H1 (cell line): ENCODE measurements at regions of chr14 and their contacts with region 1.

Region 1: DNA sequence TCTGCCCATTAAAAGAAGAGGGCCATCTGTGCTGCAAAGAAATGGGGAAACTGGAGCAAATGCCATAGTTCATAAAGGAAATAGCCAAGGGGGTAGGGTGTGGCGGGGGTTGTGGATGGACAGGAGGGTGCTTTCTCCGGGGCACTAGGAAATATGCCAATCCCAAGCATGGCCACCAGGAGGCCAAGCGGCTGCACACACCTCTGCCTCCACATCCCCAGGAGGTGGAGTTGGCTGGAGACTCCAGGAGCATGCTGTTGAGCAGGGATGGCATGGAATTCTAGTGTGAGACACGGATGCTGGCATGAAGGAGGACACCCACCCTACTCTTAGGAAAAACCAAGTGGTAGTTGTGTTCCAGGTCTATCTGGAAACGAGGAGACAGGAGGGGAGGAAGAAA is 25.2 kb downstream of the NID2 start:
- DNase-seq: peak in 1 of 2 experiments; percentile 72
- H3K4me3 ChIP-seq: no peak overlapping the region
- H3K27ac ChIP-seq: no peak overlapping the region
- H3K4me1 ChIP-seq: peaks cover 0 to 2% (median under 1%) of the 10 kb centered on the region in 4 experiments; a peak in 2 of 7 replicates
- H3K27me3 ChIP-seq: no peaks in the 10 kb centered on the region
- CTCF ChIP-seq: peak; percentile 82 to 95 (median 90)
- EP300 ChIP-seq: no peak
- POLR2A ChIP-seq: no peak
- RAD21 ChIP-seq: peak; percentile 76 to 81

Region 2: GRCh38 chr14:51969852-51970540 is 73.7 kb before region 1 on chr14:
- CTCF ChIA-PET with region 1: no interaction called
- POLR2A ChIA-PET with region 1: no interaction called
- DNase-seq: no peak
- H3K4me3 ChIP-seq: no peak overlapping the region
- H3K27ac ChIP-seq: no peak overlapping the region
- H3K4me1 ChIP-seq: no peaks in the 10 kb centered on the region
- H3K27me3 ChIP-seq: no peaks in the 10 kb centered on the region
- CTCF ChIP-seq: no peak
- EP300 ChIP-seq: no peak
- POLR2A ChIP-seq: no peak
- RAD21 ChIP-seq: no peak

Region 3: DNA sequence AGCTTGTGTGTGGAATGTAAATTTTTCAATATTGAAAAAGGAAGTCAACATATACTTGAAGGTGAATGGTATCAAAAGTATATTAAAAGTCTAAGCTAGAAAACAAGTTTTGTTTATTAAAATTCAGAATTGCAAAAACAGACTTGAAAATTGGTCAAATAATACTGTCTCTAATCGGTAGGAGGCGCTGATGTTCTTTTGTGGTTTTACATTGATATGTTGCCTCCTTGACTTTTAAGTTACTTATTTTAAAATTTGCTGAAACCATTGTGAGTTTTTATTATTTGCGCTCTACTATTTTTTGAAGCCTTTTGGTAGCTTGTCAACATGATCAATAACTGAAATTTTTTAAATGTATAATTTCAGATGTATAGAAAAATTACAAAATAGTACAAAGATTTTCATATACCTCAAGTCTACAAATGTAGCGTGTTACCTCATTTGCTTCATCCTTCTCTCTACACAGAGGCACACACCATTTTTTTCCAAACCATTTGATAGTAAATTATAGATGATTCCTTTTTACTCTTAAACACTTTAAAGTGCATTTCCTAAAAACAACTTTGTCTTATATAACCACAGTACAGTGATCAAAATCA is 47.4 kb before region 1 on chr14:
- CTCF ChIA-PET with region 1: interaction called, 10 read pairs
- POLR2A ChIA-PET with region 1: interaction called, 3 read pairs
- DNase-seq: no peak
- H3K4me3 ChIP-seq: no peak overlapping the region
- H3K27ac ChIP-seq: no peak overlapping the region
- H3K4me1 ChIP-seq: no peaks in the 10 kb centered on the region
- H3K27me3 ChIP-seq: no peaks in the 10 kb centered on the region
- CTCF ChIP-seq: peak in 2 of 3 experiments; percentile 21 to 48; a peak in 2 of 4 replicates
- EP300 ChIP-seq: no peak
- POLR2A ChIP-seq: no peak
- RAD21 ChIP-seq: peak; percentile 57 to 66

Region 4: GRCh38 chr14:52021957-52022600 is 21.6 kb before region 1 on chr14:
- CTCF ChIA-PET with region 1: interaction called, 33 read pairs
- POLR2A ChIA-PET with region 1: no interaction called
- DNase-seq: no peak
- H3K4me3 ChIP-seq: no peak overlapping the region
- H3K27ac ChIP-seq: no peak overlapping the region
- H3K4me1 ChIP-seq: peaks cover 0 to 7% (median 4%) of the 10 kb centered on the region in 4 experiments; a peak in 2 of 7 replicates
- H3K27me3 ChIP-seq: no peaks in the 10 kb centered on the region
- CTCF ChIP-seq: no peak
- EP300 ChIP-seq: no peak
- POLR2A ChIP-seq: no peak
- RAD21 ChIP-seq: no peak

Region 5: GRCh38 chr14:52060080-52060479 is 16.4 kb after region 1 on chr14:
- CTCF ChIA-PET with region 1: interaction called, 25 read pairs
- POLR2A ChIA-PET with region 1: interaction called, 5 read pairs
- DNase-seq: no peak
- H3K4me3 ChIP-seq: no peak overlapping the region
- H3K27ac ChIP-seq: no peak overlapping the region
- H3K4me1 ChIP-seq: no peaks in the 10 kb centered on the region
- H3K27me3 ChIP-seq: no peaks in the 10 kb centered on the region; a peak in 1 of 7 replicates
- CTCF ChIP-seq: no peak
- EP300 ChIP-seq: no peak
- POLR2A ChIP-seq: no peak
- RAD21 ChIP-seq: no peak

Region 6: GRCh38 chr14:52080817-52081755 is 37.4 kb after region 1 on chr14:
- CTCF ChIA-PET with region 1: interaction called, 11 read pairs
- POLR2A ChIA-PET with region 1: no interaction called
- DNase-seq: no peak
- H3K4me3 ChIP-seq: no peak overlapping the region
- H3K27ac ChIP-seq: no peak overlapping the region
- H3K4me1 ChIP-seq: no peaks in the 10 kb centered on the region
- H3K27me3 ChIP-seq: no peaks in the 10 kb centered on the region
- CTCF ChIP-seq: no peak
- EP300 ChIP-seq: no peak
- POLR2A ChIP-seq: no peak
- RAD21 ChIP-seq: no peak

Region 7: GRCh38 chr14:52131640-52132320 is 88.1 kb after region 1 on chr14:
- CTCF ChIA-PET with region 1: interaction called, 67 read pairs
- POLR2A ChIA-PET with region 1: no interaction called
- DNase-seq: peak; percentile 62 to 84
- H3K4me3 ChIP-seq: no peak overlapping the region
- H3K27ac ChIP-seq: no peak overlapping the region
- H3K4me1 ChIP-seq: no peaks in the 10 kb centered on the region
- H3K27me3 ChIP-seq: no peaks in the 10 kb centered on the region
- CTCF ChIP-seq: peak; percentile 68 to 86 (median 85)
- EP300 ChIP-seq: no peak
- POLR2A ChIP-seq: no peak
- RAD21 ChIP-seq: peak; percentile 93 to 95